PC-9 (cell line): ENCODE measurements at regions of chr9 and their contacts with region 1.

Region 1: DNA sequence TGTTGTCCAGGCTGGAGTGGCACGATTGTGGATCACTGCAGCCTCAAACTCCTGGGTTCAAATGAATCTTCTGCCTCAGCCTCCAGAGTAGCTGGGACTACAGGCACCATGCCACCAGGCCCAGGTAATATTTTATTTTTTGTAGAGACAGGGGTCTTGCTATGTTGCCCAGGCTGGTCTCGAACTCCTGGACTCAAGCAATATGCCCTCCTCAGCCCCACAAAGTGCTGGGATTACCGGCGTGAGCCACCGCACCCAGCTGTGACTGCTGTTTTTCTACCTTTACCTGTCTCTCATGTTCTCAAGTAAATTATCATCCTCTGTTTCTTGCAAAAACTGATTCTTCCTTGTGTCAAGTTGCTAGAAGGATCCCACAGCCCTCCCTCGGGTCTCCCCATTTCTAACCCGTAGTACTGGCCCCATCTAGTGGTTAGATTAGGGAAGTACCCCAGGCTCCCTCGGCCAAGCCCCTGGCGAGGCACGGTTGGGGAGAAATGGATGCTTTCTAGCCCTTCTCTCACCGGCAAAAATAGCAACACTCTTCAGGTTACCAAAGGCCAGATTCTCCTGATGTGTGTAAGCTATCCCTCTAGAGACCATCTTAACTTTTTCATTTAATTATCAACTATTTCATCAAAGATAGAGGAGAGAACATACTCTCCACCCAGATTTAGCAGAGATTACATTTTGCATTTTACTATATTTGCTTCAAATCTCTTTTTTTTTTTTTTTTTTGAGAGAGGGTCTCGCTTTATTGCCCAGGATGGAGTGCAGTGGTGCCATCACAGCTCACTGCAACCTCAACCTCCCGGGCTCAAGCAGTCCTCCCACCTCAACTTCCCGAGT is 19.2 kb upstream of the TOR1B start:
- DNase-seq: peak; percentile 54 to 68
- H3K4me3 ChIP-seq: no peak overlapping the region
- H3K27ac ChIP-seq: no peak overlapping the region
- H3K4me1 ChIP-seq: peaks cover 31% of the 10 kb centered on the region
- H3K27me3 ChIP-seq: peaks cover 6% of the 10 kb centered on the region; the same call in 1 of the 2 replicates
- CTCF ChIP-seq: peak; percentile 94

Region 2: DNA sequence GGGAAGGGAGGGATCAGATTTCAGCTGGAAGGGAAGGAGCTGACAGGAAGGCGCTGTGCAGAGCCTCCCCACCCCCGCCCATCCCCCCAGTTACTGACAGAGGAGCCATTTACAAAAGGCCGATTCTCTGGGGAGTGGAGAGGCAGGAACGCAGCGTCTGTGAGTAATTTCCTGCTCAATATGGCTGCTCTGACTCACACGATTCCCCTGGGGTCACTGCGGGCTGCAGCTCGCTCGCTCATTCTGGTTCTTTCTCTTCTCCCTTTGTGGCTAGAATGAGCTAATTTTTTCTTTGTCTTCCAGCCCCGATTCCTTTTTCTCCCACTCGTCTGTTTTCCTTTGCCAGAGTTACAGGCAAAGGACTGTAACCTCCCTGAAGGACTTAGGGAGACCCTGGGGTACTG is 643.7 kb before region 1 on chr9:
- CTCF ChIA-PET with region 1: interaction called, 12 read pairs
- POLR2A ChIA-PET with region 1: interaction called, 3 read pairs
- intact Hi-C with region 1: no loop called
- DNase-seq: peak; percentile 85 to 95
- H3K4me3 ChIP-seq: peak overlapping the region; percentile 91
- H3K27ac ChIP-seq: peak overlapping the region; percentile 100
- H3K4me1 ChIP-seq: peaks cover 43% of the 10 kb centered on the region
- H3K27me3 ChIP-seq: no peaks in the 10 kb centered on the region
- CTCF ChIP-seq: no peak

Region 3: DNA sequence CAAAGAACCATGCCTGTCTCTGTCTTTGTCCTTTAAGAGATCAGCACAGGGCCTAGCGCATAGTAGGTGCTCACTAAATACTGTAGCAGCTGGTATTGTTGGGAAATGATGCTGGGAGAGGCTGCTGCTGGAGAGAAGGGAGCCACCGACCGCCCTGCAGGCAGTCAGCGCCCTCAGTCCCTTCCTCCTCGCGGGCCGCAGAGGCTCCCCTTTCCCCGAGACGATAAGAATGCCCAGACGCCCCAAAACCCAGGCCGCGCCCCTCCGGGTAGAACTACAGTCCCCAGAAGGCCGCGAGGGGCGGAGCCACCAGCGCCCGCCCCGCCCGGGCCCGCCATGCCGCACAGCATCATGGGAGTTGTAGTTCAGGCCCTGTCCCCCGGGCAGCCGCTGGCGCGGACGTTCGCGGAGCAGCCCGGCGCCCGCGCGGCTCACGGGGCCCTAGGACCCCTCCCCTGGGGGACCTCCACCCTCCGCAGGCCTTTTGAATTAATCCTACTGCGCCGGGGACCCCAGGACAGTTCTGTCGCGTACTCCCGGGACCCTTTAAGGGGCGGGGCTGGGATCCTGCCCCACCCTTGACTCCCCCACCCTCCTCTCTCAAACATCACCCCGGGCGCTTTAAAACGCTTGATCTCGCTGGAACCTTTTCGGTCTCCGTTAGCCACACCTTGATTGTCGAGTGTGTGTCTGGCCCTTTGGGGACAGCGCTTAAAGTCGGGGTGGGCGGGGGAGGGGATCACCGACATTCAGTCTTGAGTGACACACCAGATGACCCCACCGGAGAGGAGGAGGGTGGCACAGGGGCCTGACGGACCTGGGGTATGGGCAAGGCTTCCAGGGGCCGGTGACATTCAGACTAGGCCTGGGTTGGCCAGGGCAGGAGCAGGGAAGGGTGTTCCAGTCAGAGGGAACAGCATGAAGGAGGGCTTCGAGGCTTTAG is 580.9 kb before region 1 on chr9:
- CTCF ChIA-PET with region 1: no interaction called
- POLR2A ChIA-PET with region 1: no interaction called
- intact Hi-C with region 1: no loop called
- DNase-seq: peak; percentile 61 to 93
- H3K4me3 ChIP-seq: peak overlapping the region; percentile 90
- H3K27ac ChIP-seq: peak overlapping the region; percentile 44; the same call in 1 of the 2 replicates
- H3K4me1 ChIP-seq: no peaks in the 10 kb centered on the region
- H3K27me3 ChIP-seq: no peaks in the 10 kb centered on the region
- CTCF ChIP-seq: no peak

Region 4: DNA sequence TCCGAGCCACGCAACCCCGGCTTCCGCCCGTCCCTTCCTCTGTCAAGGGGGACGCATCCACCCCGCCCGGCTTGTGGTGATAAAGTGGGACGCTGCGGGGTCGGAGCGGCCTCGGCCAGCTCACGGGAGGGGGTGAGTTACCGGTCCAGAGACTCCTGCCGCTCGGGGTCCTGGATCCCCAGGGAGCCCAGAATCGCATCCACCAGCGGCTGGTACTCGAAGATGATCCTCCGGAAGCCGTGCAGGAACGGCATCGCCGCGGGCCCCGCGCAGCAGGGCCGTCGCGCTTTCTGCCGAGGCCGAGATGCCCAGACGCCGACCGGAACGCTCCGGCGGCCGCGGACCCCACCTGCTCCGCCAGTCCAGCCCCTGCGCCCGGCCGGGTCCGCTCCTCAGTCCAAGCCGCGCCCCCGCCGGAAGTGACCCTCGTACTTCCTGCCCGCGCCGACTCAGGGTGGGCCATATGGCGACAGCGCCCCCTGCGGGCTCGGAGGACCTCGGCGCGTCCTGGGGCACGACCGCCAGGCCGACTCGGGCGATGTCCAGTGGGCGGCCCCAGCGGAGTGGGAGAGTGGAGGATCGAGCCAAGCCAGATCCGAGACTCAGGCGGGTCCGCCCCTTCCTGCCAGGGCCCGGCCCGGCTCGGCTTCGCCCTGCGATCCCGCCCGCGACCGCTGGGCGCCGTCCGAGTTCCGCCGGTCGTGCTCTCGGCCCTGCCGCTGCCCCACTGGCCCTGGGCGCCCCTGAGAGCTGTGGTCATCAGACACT is 141.8 kb before region 1 on chr9 and contains the start of gene ASB6:
- CTCF ChIA-PET with region 1: interaction called, 3 read pairs
- POLR2A ChIA-PET with region 1: no interaction called
- intact Hi-C with region 1: loop called (anchors 1 kb)
- DNase-seq: peak; percentile 81 to 100
- H3K4me3 ChIP-seq: peak within 1 kb of the TSS; percentile 96
- H3K27ac ChIP-seq: no peak within 1 kb of the TSS
- H3K4me1 ChIP-seq: peaks cover 8% of the 10 kb centered on the region
- H3K27me3 ChIP-seq: no peaks in the 10 kb centered on the region
- CTCF ChIP-seq: peak; percentile 96
- total RNA-seq, gene ASB6: 19.3 and 20.2 TPM in 2 replicates

Region 5: GRCh38 chr9:129671519-129671918 is 112.2 kb before region 1 on chr9:
- CTCF ChIA-PET with region 1: interaction called, 17 read pairs
- POLR2A ChIA-PET with region 1: no interaction called
- intact Hi-C with region 1: no loop called
- DNase-seq: no peak
- H3K4me3 ChIP-seq: no peak overlapping the region
- H3K27ac ChIP-seq: no peak overlapping the region
- H3K4me1 ChIP-seq: no peaks in the 10 kb centered on the region
- H3K27me3 ChIP-seq: peaks cover 24% of the 10 kb centered on the region; the same call in 1 of the 2 replicates
- CTCF ChIP-seq: no peak

Region 6: DNA sequence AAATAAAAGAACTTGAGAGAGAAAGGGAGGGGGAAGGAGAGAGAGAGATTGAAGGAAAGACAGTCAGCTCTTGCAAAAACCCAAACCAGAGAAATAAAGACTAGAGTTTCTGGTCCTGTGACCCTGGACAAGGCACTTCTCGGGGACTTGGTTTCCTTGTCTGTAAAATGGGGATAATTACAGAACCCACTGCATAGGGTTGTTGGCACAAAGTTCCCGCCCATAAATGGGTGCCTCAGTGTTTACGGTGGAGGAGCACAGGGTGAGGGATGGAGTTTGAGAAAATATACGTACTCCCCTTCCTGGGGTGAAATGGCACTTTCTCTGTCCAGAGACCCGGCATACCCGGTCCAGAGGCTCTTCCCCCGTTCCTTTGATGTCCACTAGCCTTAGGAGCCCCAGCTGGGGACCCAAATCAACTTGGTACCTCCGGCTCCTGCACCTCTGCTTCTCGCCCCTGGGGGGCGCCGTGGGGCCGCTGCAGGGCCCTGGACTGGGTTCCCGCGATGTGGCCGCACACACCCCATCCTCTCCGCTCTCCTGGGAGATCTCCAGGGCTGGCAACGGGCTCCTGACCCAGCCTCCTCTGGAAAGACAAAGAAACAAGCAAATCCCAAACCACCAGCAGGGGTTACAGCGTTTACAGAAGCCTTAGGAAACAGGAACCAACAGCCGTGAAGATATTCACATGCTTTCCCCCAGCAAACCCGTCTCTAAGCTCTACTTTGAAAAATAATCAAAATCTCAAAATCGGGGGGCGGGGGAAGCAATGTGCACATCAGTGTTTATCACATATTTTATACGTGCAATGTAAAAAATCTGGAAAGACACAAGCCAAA is 57.2 kb before region 1 on chr9:
- CTCF ChIA-PET with region 1: interaction called, 6 read pairs
- POLR2A ChIA-PET with region 1: no interaction called
- intact Hi-C with region 1: loop called (anchors 1 kb)
- DNase-seq: peak; percentile 48 to 76
- H3K4me3 ChIP-seq: no peak overlapping the region
- H3K27ac ChIP-seq: no peak overlapping the region
- H3K4me1 ChIP-seq: no peaks in the 10 kb centered on the region
- H3K27me3 ChIP-seq: no peaks in the 10 kb centered on the region
- CTCF ChIP-seq: peak; percentile 97